ENCODE measurements at regions of chr20 and their contacts with region 1.

Region 1: DNA sequence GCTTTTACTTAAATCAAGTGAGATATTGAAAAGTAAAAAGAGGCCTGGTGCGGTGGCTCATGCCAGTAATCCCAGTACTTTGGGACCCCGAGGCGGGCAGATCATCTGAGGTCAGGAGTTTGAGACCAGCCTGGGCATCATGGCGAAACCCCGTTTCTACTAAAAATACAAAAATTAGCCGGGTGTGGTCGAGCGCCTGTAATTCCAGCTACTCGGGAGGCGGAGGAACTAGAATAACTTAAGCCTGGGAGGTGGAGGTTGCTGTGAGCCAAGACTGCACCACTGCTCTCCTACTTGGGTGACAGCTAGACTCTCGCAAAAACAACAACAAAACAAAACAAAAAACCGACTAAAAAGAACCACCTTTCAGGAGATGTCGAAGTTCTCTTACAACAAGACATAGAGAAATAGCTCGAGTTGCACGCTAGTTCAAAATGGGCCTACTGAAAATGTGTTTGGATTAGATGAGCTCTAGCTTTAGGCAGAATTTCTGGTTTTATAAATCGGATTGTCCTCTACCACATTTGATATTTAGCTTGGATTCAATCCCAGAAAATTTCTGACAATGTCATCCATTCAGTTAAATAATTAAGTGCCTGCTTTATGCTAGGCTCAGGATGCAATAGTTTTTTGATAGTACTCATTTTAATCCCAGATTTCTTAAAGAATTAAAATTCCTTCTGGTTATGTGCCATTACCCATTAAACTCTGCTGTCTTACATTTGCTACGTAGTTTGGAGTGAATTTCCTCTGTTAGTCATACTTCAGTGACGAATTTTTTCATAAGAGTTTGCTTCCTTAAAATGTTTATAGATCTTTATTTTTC is 137.5 kb upstream of the SHLD1 start:
- H3K4me3 ChIP-seq: no peak overlapping the region
- H3K27ac ChIP-seq: no peak overlapping the region
- H3K4me1 ChIP-seq: peaks cover 23% of the 10 kb centered on the region
- CTCF ChIP-seq: no peak

Region 2: DNA sequence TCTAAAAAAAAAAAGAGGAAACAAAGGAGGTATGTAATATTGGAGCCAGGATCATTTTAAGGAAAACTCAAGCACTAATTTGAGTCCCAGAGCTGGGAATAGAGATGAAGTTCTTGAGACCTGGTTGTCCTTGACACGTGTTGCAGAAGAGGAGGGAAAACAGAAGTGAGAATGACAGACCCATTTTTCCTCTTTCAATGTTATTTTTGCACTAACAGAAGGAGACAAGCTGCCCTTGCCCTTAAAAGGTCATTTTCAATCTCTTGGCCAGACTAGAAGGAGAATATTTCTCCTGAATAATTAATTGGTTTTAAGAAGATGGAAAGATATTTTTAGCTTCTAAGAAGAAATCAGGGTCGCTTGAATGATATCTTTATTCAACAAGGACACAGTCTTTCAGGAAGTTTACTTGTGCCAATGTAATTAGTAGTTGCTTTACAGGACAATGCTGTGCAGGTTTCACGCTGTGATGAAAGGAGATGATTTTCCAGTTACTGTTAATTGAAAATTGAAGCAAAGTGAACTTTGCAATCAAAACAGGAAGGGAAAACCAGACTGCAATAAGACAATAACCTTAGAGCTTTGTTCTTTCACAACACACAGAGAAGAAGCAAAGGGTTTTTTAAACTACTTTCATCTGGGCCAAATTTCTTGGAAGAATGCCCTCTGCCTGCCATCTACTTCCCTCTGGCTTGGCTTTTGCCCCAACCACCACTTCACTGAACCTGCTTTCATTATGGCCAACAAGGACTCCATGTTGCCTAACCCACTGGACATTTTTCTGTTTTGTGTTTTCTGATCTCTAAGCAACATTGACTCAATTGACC is 29.7 kb after region 1 on chr20:
- CTCF ChIA-PET with region 1: no interaction called
- POLR2A ChIA-PET with region 1: no interaction called
- H3K4me3 ChIP-seq: no peak overlapping the region
- H3K27ac ChIP-seq: no peak overlapping the region
- H3K4me1 ChIP-seq: no peaks in the 10 kb centered on the region
- CTCF ChIP-seq: no peak

Region 3: DNA sequence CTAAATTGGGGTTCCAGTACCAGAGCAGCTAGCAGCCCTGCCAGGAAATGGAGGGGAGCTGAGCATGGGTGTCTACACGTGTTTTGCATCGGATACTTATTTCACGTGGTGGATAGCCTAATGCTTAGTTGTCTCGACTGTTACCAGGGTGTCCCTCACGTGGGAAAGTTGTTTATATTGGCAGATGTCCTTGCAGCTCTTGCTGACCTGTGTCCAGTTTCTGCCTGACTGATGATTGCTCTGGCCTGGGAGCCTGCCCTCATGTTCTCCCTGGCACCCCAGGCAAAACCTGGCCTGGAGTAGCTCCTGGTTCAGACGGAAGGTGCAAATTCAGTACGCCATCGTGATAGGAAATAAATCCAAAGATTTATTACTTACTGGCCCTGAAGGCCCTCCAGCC is 521.9 kb after region 1 on chr20:
- CTCF ChIA-PET with region 1: no interaction called
- POLR2A ChIA-PET with region 1: interaction called, 13 read pairs
- H3K4me3 ChIP-seq: no peak overlapping the region
- H3K27ac ChIP-seq: no peak overlapping the region
- H3K4me1 ChIP-seq: no peaks in the 10 kb centered on the region
- CTCF ChIP-seq: no peak